ENCODE measurements at regions of chr1 and their contacts with region 1.

Region 1: GRCh38 chr1:153990468-153991150 is at the start of gene RPS27:
- DNase-seq: peak; percentile 76 to 97 (median 92)
- ATAC-seq: peak; percentile 90
- H3K4me3 ChIP-seq: peak within 1 kb of the TSS; percentile 82
- H3K4me3 Mint-ChIP-seq: peak within 1 kb of the TSS; percentile 83 to 99 (median 96)
- H3K27ac ChIP-seq: peak within 1 kb of the TSS; percentile 99
- H3K27ac Mint-ChIP-seq: peak within 1 kb of the TSS; percentile 92 to 100 (median 99)
- H3K4me1 ChIP-seq: peaks cover 26 to 34% of the 10 kb centered on the region in 2 donors
- H3K4me1 Mint-ChIP-seq: peaks cover 32 to 62% (median 44%) of the 10 kb centered on the region in 7 donors
- H3K27me3 ChIP-seq: no peaks in the 10 kb centered on the region
- H3K27me3 Mint-ChIP-seq: peaks cover 2 to 8% (median 4%) of the 10 kb centered on the region in 5 donors
- total RNA-seq, gene RPS27: 2,313 to 8,530 (median 5,699) TPM

Region 2: GRCh38 chr1:153658400-153659174 is 332.0 kb before region 1 on chr1 and contains the start of gene SNAPIN:
- CTCF ChIA-PET with region 1: no interaction called
- POLR2A ChIA-PET with region 1: no interaction called
- intact Hi-C with region 1: loop called (anchors 1 kb)
- DNase-seq: peak; percentile 81 to 94 (median 88)
- ATAC-seq: peak; percentile 98
- H3K4me3 ChIP-seq: peak within 1 kb of the TSS; percentile 93
- H3K4me3 Mint-ChIP-seq: peak within 1 kb of the TSS; percentile 91 to 97 (median 94)
- H3K27ac ChIP-seq: peak within 1 kb of the TSS; percentile 90
- H3K27ac Mint-ChIP-seq: peak within 1 kb of the TSS; percentile 90 to 98 (median 91)
- H3K4me1 ChIP-seq: peaks cover 9 to 13% of the 10 kb centered on the region in 2 donors
- H3K4me1 Mint-ChIP-seq: peaks cover 8 to 26% (median 14%) of the 10 kb centered on the region in 7 donors
- H3K27me3 ChIP-seq: no peaks in the 10 kb centered on the region
- H3K27me3 Mint-ChIP-seq: no peaks in the 10 kb centered on the region
- total RNA-seq, gene SNAPIN: 10.2 to 43.5 (median 29.8) TPM

Region 3: DNA sequence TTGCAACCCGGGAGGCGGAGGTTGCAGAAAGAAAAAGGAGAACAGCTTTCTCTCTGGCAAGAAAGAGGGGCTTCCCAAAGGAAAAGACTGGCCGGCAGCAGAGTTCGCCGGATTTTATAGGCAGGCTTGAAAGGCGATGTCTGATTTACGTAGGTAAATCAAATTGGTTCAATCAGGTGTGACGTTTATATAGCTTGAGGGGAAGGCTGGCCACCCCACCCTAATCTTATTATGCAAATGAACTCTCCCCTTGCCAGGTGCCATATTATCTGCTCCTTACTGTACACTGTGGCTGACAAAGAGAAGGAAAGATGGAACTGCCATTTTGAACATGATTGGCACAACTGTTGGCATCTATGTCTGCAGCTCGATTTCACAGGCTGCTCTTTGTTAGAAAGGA is 279.6 kb before region 1 on chr1:
- CTCF ChIA-PET with region 1: no interaction called
- POLR2A ChIA-PET with region 1: no interaction called
- intact Hi-C with region 1: no loop called
- DNase-seq: no peak
- ATAC-seq: no peak
- H3K4me3 ChIP-seq: no peak overlapping the region
- H3K4me3 Mint-ChIP-seq: no peak overlapping the region
- H3K27ac ChIP-seq: no peak overlapping the region
- H3K27ac Mint-ChIP-seq: no peak overlapping the region
- H3K4me1 ChIP-seq: no peaks in the 10 kb centered on the region
- H3K4me1 Mint-ChIP-seq: peaks cover 0 to 3% (median 0%) of the 10 kb centered on the region in 7 donors
- H3K27me3 ChIP-seq: no peaks in the 10 kb centered on the region
- H3K27me3 Mint-ChIP-seq: peaks cover 0 to 19% (median 4%) of the 10 kb centered on the region in 5 donors

Region 4: GRCh38 chr1:153775458-153776327 is 214.9 kb before region 1 on chr1:
- CTCF ChIA-PET with region 1: no interaction called
- POLR2A ChIA-PET with region 1: interaction called, 12 read pairs
- intact Hi-C with region 1: no loop called
- DNase-seq: peak; percentile 40 to 63 (median 59)
- ATAC-seq: peak; percentile 76
- H3K4me3 ChIP-seq: peak overlapping the region; percentile 73
- H3K4me3 Mint-ChIP-seq: peak overlapping the region; percentile 77 to 89 (median 86)
- H3K27ac ChIP-seq: peak overlapping the region; percentile 66
- H3K27ac Mint-ChIP-seq: peak overlapping the region in 7 of 9 donors; percentile 29 to 80 (median 68)
- H3K4me1 ChIP-seq: peaks cover 6 to 23% of the 10 kb centered on the region in 2 donors
- H3K4me1 Mint-ChIP-seq: peaks cover 14 to 35% (median 26%) of the 10 kb centered on the region in 7 donors
- H3K27me3 ChIP-seq: no peaks in the 10 kb centered on the region
- H3K27me3 Mint-ChIP-seq: no peaks in the 10 kb centered on the region

Region 5: DNA sequence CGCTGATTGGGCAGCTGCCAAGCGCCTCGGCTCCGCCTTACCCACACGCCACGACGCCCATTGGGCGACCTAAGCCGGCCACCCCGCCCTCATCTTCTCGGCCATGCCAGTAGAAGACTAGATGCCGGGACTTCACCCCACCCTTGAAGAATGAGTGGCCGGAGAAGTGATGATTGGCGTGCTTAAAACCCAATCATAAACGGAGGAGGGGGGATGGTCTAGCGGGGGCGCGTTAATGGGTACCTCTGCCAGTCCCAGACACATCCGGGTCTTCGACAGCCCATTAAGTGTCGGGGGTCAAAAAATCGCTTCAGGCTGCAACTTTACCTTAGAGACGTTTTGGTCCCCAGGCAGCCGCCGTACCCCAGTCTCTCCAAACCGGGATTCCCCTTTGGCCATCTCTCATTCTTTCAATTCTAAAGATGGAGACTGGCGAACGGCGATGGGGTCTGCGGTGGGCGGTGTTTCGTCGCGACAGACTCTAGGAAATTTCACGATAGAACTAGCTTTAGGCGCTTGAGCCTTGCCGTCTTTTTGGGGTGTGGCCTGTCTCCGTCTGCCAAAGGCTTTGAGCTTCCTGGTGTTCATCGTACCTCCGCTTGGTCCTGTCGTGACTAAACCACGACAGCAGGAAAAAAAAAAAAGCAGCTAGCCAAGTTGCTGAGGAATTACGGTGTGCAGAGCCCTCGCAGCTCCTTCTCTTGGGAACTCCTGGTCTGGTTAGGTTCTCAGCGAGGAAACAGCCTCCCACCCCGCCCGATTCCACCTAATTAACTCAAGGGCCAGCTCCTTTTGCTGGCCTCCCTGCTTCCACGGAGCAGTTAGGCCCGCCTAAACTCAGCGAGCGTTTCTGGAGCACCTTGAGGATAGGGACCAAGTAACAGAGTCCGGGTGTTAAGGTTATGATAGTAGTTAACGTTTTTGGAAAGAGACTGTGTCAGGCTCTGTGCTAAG is 67.4 kb before region 1 on chr1 and contains the start of gene GATAD2B:
- CTCF ChIA-PET with region 1: interaction called, 12 read pairs
- POLR2A ChIA-PET with region 1: interaction called, 50 read pairs
- intact Hi-C with region 1: loop called (anchors 1 kb)
- DNase-seq: peak; percentile 86 to 100 (median 99)
- ATAC-seq: peak; percentile 94
- H3K4me3 ChIP-seq: peak within 1 kb of the TSS; percentile 87
- H3K4me3 Mint-ChIP-seq: peak within 1 kb of the TSS; percentile 83 to 96 (median 94)
- H3K27ac ChIP-seq: peak within 1 kb of the TSS; percentile 97
- H3K27ac Mint-ChIP-seq: peak within 1 kb of the TSS; percentile 90 to 99 (median 97)
- H3K4me1 ChIP-seq: peaks cover 35% of the 10 kb centered on the region in 2 donors
- H3K4me1 Mint-ChIP-seq: peaks cover 31 to 53% (median 44%) of the 10 kb centered on the region in 7 donors
- H3K27me3 ChIP-seq: no peaks in the 10 kb centered on the region
- H3K27me3 Mint-ChIP-seq: peaks cover 0 to 3% (median 0%) of the 10 kb centered on the region in 5 donors
- total RNA-seq, gene GATAD2B: 67.3 to 102 (median 75.5) TPM

Region 6: DNA sequence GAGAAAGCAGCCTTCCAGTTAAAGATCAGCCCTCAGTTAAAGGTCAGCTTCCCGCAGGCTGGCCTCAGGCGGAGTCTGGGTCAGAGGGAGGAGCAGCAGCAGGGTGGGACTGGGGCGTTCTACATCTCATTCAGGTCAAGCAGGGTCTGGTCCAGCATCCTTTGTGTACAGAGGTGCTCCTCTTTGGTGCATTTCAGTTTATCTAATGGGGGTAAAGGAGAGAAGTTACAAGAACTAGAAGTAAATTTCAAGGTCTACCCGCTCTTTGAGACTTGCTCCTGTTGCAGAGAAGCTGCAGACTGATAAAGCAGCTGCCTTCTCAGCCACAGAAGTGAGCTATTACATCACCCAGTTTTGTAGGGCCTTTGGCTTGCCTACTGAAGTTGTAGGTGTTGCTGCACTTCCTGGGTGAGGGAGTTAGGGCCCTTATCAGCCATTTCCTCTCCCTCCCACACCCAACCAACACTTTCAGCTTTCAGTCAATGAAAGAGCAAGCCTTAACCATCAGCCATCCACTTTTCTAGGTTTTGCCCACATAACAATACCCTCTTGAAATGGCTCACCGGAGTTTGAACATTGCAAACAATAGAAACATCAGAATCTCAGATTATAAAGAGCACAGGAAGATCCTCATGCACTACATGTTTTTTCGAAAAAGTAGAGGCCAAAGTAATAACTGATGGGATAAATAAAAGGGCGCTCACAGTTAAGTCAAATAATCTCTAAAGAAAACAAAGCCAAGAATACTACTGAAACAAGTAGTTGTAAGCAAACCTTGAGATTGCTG is 167.1 kb after region 1 on chr1:
- CTCF ChIA-PET with region 1: interaction called, 3 read pairs
- POLR2A ChIA-PET with region 1: interaction called, 54 read pairs
- intact Hi-C with region 1: loop called (anchors 1 to 5 kb)
- DNase-seq: peak in 8 of 9 donors; percentile 71 to 90 (median 86)
- ATAC-seq: peak; percentile 98
- H3K4me3 ChIP-seq: peak overlapping the region; percentile 12
- H3K4me3 Mint-ChIP-seq: peak overlapping the region; percentile 71 to 90 (median 79)
- H3K27ac ChIP-seq: peak overlapping the region; percentile 74
- H3K27ac Mint-ChIP-seq: peak overlapping the region; percentile 89 to 97 (median 94)
- H3K4me1 ChIP-seq: peaks cover 34 to 71% of the 10 kb centered on the region in 2 donors
- H3K4me1 Mint-ChIP-seq: peaks cover 36 to 81% (median 69%) of the 10 kb centered on the region in 7 donors
- H3K27me3 ChIP-seq: no peaks in the 10 kb centered on the region
- H3K27me3 Mint-ChIP-seq: no peaks in the 10 kb centered on the region

Region 7: GRCh38 chr1:154324669-154325582 is 334.3 kb after region 1 on chr1 and contains the start of gene ATP8B2:
- CTCF ChIA-PET with region 1: no interaction called
- POLR2A ChIA-PET with region 1: interaction called, 4 read pairs
- intact Hi-C with region 1: loop called in 1 of 2 experiments (anchors 5 kb)
- DNase-seq: peak; percentile 60 to 82 (median 77)
- ATAC-seq: peak; percentile 80
- H3K4me3 ChIP-seq: peak within 1 kb of the TSS; percentile 79
- H3K4me3 Mint-ChIP-seq: peak within 1 kb of the TSS; percentile 92 to 98 (median 96)
- H3K27ac ChIP-seq: peak within 1 kb of the TSS; percentile 94
- H3K27ac Mint-ChIP-seq: peak within 1 kb of the TSS; percentile 80 to 95 (median 92)
- H3K4me1 ChIP-seq: peaks cover 24 to 36% of the 10 kb centered on the region in 2 donors
- H3K4me1 Mint-ChIP-seq: peaks cover 27 to 42% (median 38%) of the 10 kb centered on the region in 7 donors
- H3K27me3 ChIP-seq: no peaks in the 10 kb centered on the region
- H3K27me3 Mint-ChIP-seq: peaks cover 0 to 31% (median 0%) of the 10 kb centered on the region in 5 donors
- total RNA-seq, gene ATP8B2: 105 to 130 (median 117) TPM

Region 8: GRCh38 chr1:154925335-154926170 is 934.9 kb after region 1 on chr1:
- CTCF ChIA-PET with region 1: no interaction called
- POLR2A ChIA-PET with region 1: no interaction called
- intact Hi-C with region 1: no loop called
- DNase-seq: no peak
- ATAC-seq: peak; percentile 32
- H3K4me3 ChIP-seq: no peak overlapping the region
- H3K4me3 Mint-ChIP-seq: peak overlapping the region in 1 of 10 donors; percentile 39
- H3K27ac ChIP-seq: no peak overlapping the region
- H3K27ac Mint-ChIP-seq: peak overlapping the region in 2 of 9 donors; percentile 26 to 78
- H3K4me1 ChIP-seq: no peaks in the 10 kb centered on the region
- H3K4me1 Mint-ChIP-seq: peaks cover 0 to 15% (median 5%) of the 10 kb centered on the region in 7 donors
- H3K27me3 ChIP-seq: no peaks in the 10 kb centered on the region
- H3K27me3 Mint-ChIP-seq: no peaks in the 10 kb centered on the region

Measured in naive thymus-derived CD4-positive, alpha-beta T cell (primary cell).